CD4-positive, alpha-beta memory T cell (primary cell): ENCODE measurements at regions of chr1 and their contacts with region 1.

Region 1: DNA sequence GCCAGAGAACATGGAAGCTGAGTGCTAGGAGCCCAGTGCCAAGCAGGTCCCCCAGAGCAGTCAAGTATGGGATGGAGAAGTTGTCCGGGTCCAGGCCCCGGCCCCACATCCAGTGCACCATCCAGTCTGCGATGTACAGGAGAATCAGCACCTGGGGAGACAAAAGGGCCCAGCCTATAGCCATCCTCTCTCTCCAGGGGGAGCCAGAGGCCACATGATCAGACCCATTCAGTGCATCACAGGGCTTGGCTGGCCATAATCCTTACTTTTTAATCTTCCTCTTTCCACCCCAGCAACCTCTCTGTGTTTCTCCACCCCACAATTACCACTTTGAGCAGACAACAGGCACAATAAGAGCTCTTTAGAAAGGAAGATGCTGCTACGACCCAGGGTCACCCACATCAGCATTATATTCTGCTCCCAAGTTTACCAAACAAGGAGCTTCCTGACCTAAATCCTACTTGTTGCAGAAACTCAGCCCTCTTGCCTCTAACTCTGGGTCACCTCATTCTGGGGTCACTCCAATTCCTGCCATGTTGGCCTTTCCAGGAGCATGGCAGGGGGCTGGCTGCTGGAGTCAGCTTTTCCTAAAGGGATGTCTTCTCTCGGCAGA is 16.4 kb upstream of the RAB29 start:
- DNase-seq: peak; percentile 51 to 64 (median 56)
- H3K4me3 ChIP-seq: no peak overlapping the region
- H3K4me3 Mint-ChIP-seq: no peak overlapping the region
- H3K27ac ChIP-seq: no peak overlapping the region
- H3K27ac Mint-ChIP-seq: peak overlapping the region in 2 of 7 donors; percentile 74 to 81
- H3K4me1 ChIP-seq: no peaks in the 10 kb centered on the region
- H3K4me1 Mint-ChIP-seq: no peaks in the 10 kb centered on the region
- H3K27me3 ChIP-seq: no peaks in the 10 kb centered on the region
- H3K27me3 Mint-ChIP-seq: no peaks in the 10 kb centered on the region

Region 2: GRCh38 chr1:205382561-205382960 is 409.1 kb before region 1 on chr1:
- CTCF ChIA-PET with region 1: no interaction called
- POLR2A ChIA-PET with region 1: no interaction called
- intact Hi-C with region 1: no loop called
- DNase-seq: no peak
- H3K4me3 ChIP-seq: no peak overlapping the region
- H3K4me3 Mint-ChIP-seq: no peak overlapping the region
- H3K27ac ChIP-seq: no peak overlapping the region
- H3K27ac Mint-ChIP-seq: no peak overlapping the region
- H3K4me1 ChIP-seq: no peaks in the 10 kb centered on the region
- H3K4me1 Mint-ChIP-seq: peaks cover 0 to under 1% (median 0%) of the 10 kb centered on the region in 4 donors
- H3K27me3 ChIP-seq: no peaks in the 10 kb centered on the region
- H3K27me3 Mint-ChIP-seq: peaks cover 2 to 8% of the 10 kb centered on the region in 2 donors

Region 3: GRCh38 chr1:205805082-205805712 is 13.5 kb after region 1 on chr1:
- CTCF ChIA-PET with region 1: interaction called, 17 read pairs
- POLR2A ChIA-PET with region 1: interaction called, 3 read pairs
- intact Hi-C with region 1: no loop called
- DNase-seq: peak in 1 of 5 donors; percentile 15
- H3K4me3 ChIP-seq: no peak overlapping the region
- H3K4me3 Mint-ChIP-seq: peak overlapping the region in 7 of 8 donors; percentile 56 to 81 (median 76)
- H3K27ac ChIP-seq: peak overlapping the region; percentile 27
- H3K27ac Mint-ChIP-seq: peak overlapping the region; percentile 28 to 88 (median 85)
- H3K4me1 ChIP-seq: peaks cover 55% of the 10 kb centered on the region
- H3K4me1 Mint-ChIP-seq: peaks cover 45 to 81% (median 61%) of the 10 kb centered on the region in 4 donors
- H3K27me3 ChIP-seq: no peaks in the 10 kb centered on the region
- H3K27me3 Mint-ChIP-seq: no peaks in the 10 kb centered on the region

Region 4: DNA sequence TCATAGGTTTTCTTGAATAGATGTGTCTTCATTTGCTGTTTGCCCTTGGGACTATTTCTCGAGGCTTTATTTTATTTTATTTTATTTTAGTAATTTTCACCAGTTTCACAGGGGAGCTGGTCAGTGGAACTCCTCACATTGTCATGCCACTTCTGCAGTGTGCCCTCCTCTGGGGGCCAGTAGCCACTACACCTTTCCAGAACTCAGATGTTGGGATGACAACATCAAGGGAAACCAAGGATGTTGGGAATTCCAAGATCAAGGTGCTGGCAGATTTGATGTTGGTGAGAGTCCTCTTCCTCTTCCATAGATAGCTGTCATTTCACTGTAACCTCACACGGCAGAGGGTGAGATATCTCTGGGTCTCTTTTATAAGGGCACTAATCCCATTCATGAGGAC is 116.1 kb after region 1 on chr1:
- CTCF ChIA-PET with region 1: interaction called, 12 read pairs
- POLR2A ChIA-PET with region 1: no interaction called
- intact Hi-C with region 1: loop called (anchors 1 kb)
- DNase-seq: no peak
- H3K4me3 ChIP-seq: no peak overlapping the region
- H3K4me3 Mint-ChIP-seq: no peak overlapping the region
- H3K27ac ChIP-seq: no peak overlapping the region
- H3K27ac Mint-ChIP-seq: no peak overlapping the region
- H3K4me1 ChIP-seq: no peaks in the 10 kb centered on the region
- H3K4me1 Mint-ChIP-seq: no peaks in the 10 kb centered on the region
- H3K27me3 ChIP-seq: no peaks in the 10 kb centered on the region
- H3K27me3 Mint-ChIP-seq: peaks cover 1 to 3% of the 10 kb centered on the region in 2 donors

Region 5: DNA sequence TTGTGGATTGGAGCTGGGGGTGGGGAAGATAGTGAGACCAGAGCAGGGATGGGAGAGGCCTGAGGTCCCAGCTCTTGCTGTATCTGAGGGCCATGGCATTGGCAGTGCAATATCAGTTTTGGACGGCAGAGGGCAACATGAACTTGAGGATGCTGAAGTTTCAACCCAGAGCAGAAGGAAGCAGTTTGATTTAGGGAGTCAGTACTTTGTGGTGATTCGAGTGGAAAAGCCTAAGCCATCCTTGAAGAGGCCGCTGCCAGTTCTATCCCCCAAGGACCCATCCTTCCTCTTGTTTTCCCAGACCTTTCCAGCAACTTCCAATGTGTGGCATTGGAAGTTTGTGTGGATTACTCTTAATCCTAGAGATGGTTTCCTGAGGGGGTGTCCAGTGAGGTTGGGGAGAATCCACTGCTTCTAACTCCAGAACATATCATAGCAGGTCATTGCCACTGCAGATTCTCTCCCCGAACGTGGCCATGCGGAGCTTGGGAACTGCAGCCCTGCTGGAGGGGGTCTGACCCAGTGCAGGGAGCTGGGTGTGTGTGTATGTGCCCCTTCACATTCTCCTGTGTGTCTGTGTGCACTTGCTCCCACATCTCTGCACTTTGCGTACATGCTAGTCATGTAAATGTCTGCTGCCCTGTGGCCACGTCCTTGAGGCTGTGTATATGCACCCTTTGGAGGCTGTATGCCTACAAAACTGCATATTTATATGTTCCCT is 127.5 kb after region 1 on chr1:
- CTCF ChIA-PET with region 1: interaction called, 8 read pairs
- POLR2A ChIA-PET with region 1: no interaction called
- intact Hi-C with region 1: loop called (anchors 1 kb)
- DNase-seq: peak; percentile 41 to 62 (median 51)
- H3K4me3 ChIP-seq: no peak overlapping the region
- H3K4me3 Mint-ChIP-seq: no peak overlapping the region
- H3K27ac ChIP-seq: no peak overlapping the region
- H3K27ac Mint-ChIP-seq: no peak overlapping the region
- H3K4me1 ChIP-seq: no peaks in the 10 kb centered on the region
- H3K4me1 Mint-ChIP-seq: peaks cover 0 to 1% (median 0%) of the 10 kb centered on the region in 4 donors
- H3K27me3 ChIP-seq: no peaks in the 10 kb centered on the region
- H3K27me3 Mint-ChIP-seq: peaks cover 0 to 5% of the 10 kb centered on the region in 2 donors